ENCODE measurements at regions of chr12 and their contacts with region 1.

Region 1: DNA sequence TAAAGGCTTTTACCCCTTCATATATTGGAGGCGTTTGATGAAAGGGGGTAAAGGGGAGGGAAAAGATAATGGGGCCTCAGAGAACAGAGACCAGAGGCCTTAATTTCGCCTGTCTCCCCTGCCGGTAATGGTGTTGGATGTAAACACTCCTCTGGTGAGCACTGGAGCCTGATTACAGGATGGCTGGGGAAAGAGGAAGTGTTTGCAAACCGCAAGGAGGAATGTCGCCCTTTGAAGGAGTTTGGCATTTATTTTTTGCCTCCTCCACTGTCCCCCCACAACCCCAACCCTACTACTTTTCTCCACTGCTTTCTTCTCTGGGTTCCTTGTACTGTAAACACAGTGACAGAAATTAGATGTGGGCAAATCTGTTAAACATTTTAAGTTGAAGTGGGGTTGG is 211.9 kb upstream of the TBX3 start:
- DNase-seq: no peak
- ATAC-seq: no peak

Region 2: DNA sequence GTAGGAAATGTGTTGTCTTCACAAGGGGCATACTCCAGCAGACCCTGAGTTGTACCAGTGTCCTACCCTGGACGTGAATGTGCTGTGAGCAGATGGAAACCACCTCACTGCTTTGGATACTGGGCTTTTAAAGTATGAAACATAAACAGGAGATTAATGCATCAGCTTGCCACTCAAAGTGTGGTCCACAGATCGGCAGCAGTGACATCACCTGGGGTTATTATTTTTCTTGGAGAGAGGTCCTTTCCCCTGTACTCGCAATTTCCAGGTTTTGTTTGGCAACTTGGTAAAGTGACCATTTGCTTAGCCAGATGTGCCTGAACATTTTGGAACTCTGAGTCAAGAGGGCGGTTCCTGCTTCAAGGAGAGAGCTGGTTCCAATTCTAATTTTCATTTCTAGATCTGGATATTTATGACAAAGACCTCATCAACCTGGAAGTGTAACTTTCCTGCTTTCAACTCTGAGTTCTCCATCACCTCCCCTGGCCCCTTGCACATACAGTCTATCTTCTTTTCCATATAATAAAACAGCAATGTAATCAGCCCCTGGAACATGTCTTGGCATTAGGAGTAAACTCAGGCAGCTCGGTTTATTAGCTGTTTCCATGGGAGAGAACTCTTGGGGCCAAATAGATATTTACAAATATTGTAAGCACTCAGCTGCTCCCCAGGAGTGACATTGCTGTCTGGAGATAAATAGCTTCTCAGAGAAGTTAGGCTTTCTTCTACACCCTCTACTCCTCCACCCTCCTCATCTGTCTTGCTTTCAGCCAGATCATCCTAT is 25.1 kb after region 1 on chr12:
- intact Hi-C with region 1: loop called (anchors 1 kb)
- DNase-seq: no peak
- ATAC-seq: peak; percentile 83